ENCODE measurements at regions of chr15 and their contacts with region 1.

Region 1: GRCh38 chr15:85296615-85297402 is 83.6 kb upstream of the AKAP13 start:
- DNase-seq: peak; percentile 40
- ATAC-seq: peak; percentile 99
- H3K4me3 Mint-ChIP-seq: peak overlapping the region; percentile 76
- H3K27ac Mint-ChIP-seq: peak overlapping the region; percentile 48
- H3K4me1 Mint-ChIP-seq: peaks cover 23% of the 10 kb centered on the region
- H3K27me3 Mint-ChIP-seq: no peaks in the 10 kb centered on the region
- CTCF ChIP-seq: peak; percentile 80

Region 2: DNA sequence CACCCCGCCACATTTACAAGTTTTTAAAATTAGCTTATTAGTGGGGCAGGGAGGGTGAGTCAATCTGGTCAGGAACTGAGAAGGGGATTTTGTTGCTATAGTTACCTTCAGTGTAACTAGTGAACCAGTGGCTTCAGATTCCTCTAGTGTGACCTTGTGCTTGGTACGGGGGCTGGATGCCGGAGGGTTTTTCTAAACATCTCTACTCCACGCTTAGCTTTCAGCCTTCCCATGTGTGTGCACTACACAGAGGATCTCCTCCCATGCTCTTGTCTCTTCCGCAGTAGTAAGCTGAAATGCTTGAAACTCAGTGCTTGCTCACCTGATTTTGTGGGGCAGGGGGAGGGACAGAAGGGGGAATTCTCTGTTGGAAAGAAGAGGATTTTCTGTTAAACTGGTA is 15.7 kb after region 1 on chr15:
- CTCF ChIA-PET with region 1: interaction called, 23 read pairs
- POLR2A ChIA-PET with region 1: interaction called, 14 read pairs
- intact Hi-C with region 1: loop called (anchors 1 kb)
- DNase-seq: peak; percentile 53
- ATAC-seq: peak; percentile 89
- H3K4me3 Mint-ChIP-seq: peak overlapping the region; percentile 87
- H3K27ac Mint-ChIP-seq: peak overlapping the region; percentile 99
- H3K4me1 Mint-ChIP-seq: peaks cover 96% of the 10 kb centered on the region
- H3K27me3 Mint-ChIP-seq: no peaks in the 10 kb centered on the region
- CTCF ChIP-seq: no peak

Region 3: DNA sequence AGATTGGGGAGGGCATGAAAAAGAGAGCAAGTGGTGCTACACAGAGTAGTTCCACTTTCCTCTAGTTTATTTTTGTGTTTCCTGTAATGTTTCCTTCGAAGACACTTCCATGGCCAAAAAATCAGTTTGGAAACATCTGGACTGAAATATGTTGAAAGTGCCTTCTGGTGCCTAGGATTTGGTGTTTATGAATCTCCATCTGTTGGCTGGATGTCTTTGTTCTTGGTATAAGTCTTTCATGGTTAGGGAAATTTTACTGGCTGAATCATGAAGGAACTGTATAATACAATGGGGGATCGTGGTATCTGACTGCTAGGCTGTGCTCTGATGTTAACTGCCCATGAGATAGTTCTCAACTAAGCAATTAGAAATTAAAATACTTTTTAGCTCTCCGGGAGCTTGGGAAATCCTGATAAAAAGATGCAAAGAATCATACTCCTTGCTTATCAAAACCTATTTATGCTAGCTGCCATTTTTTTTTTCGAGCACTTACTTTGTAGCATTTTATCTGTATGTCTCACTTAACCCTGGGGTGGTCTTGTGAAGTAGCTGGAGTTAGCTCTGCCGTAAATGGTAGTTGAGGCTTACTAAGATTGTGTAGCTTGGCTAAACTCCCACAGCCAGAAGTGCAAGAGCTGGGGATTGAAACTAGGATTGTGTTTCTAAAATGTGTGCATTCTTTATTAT is 105.5 kb after region 1 on chr15:
- CTCF ChIA-PET with region 1: interaction called, 12 read pairs
- POLR2A ChIA-PET with region 1: interaction called, 5 read pairs
- intact Hi-C with region 1: no loop called
- DNase-seq: no peak
- ATAC-seq: no peak
- H3K4me3 Mint-ChIP-seq: peak overlapping the region; percentile 12
- H3K27ac Mint-ChIP-seq: peak overlapping the region; percentile 89
- H3K4me1 Mint-ChIP-seq: peaks cover 89% of the 10 kb centered on the region
- H3K27me3 Mint-ChIP-seq: no peaks in the 10 kb centered on the region
- CTCF ChIP-seq: no peak

Region 4: DNA sequence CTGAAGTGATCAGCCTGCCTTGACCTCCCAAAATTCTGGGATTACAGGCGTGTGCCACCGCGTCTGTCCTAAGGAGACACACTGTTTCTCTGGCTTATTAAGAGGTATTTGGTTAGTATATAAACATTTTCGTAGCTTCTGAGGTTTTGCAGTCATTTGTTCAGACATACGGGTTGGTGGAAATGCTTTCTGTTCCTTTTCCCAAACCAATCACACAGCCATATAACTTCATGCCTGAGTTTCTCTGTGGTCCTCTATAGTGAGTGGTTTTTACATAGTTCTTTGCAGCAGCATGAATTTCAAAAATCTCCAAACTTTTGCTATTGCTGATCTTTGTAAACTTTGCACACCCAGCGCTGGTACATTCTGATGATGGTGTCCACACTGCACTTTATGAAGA is 184.1 kb after region 1 on chr15:
- CTCF ChIA-PET with region 1: interaction called, 16 read pairs
- POLR2A ChIA-PET with region 1: no interaction called
- intact Hi-C with region 1: loop called (anchors 2 kb)
- DNase-seq: no peak
- ATAC-seq: peak; percentile 46
- H3K4me3 Mint-ChIP-seq: peak overlapping the region; percentile 38
- H3K27ac Mint-ChIP-seq: no peak overlapping the region
- H3K4me1 Mint-ChIP-seq: peaks cover 85% of the 10 kb centered on the region
- H3K27me3 Mint-ChIP-seq: no peaks in the 10 kb centered on the region
- CTCF ChIP-seq: no peak

Region 5: GRCh38 chr15:85504749-85505676 is 208.2 kb after region 1 on chr15:
- CTCF ChIA-PET with region 1: interaction called, 55 read pairs
- POLR2A ChIA-PET with region 1: no interaction called
- intact Hi-C with region 1: loop called (anchors 1 kb)
- DNase-seq: no peak
- ATAC-seq: peak; percentile 56
- H3K4me3 Mint-ChIP-seq: no peak overlapping the region
- H3K27ac Mint-ChIP-seq: no peak overlapping the region
- H3K4me1 Mint-ChIP-seq: peaks cover 49% of the 10 kb centered on the region
- H3K27me3 Mint-ChIP-seq: no peaks in the 10 kb centered on the region
- CTCF ChIP-seq: peak; percentile 60

Region 6: DNA sequence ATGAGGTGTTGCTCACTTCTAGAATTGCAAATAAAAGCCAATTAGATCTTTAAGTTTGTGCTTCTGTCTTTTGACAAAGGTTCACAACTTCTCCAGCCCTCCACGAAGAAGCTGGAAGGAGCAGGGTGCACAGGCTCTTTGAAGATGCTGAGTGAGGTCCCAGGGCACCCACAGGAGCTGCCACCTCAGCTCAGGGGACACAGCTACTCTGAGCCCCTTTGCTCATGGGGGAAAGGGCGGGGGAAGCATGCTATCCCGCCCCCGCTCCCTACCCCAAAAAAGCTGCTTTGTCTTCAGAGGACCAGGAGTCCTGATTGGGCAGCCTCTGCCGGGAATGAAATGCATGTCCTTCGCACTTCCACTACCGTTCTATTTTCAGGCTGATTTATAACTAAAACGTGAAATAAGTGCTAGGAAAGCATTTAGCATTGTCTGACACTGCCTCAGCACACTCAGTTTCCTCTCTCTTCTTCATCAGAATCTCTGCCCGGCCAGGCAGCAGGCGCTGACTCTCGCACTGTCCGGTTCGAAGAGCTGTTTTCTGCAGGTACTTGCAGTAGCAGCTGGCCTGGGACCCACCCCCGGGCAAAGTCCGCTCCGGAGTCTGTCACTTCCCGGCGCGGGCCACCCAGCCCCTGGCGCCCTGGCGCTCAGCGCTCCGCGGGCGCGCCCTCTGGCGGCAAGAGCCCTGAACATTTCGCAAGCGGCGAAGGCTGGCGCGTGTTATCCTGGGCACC is 543.4 kb after region 1 on chr15:
- CTCF ChIA-PET with region 1: interaction called, 9 read pairs
- POLR2A ChIA-PET with region 1: interaction called, 3 read pairs
- intact Hi-C with region 1: loop called (anchors 2 kb)
- DNase-seq: peak; percentile 75
- ATAC-seq: peak; percentile 97
- H3K4me3 Mint-ChIP-seq: peak overlapping the region; percentile 71
- H3K27ac Mint-ChIP-seq: no peak overlapping the region
- H3K4me1 Mint-ChIP-seq: peaks cover 5% of the 10 kb centered on the region
- H3K27me3 Mint-ChIP-seq: peaks cover 11% of the 10 kb centered on the region
- CTCF ChIP-seq: peak; percentile 64

Measured in activated B cell treated with CpG ODN at 0.5 μM for 24 hours (primary cell).